ENCODE measurements at regions of chr2 and their contacts with region 1.

Region 1: GRCh38 chr2:173402405-173402974 is 47.8 kb downstream of the CDCA7 start:
- DNase-seq: peak; percentile 84 to 89
- ATAC-seq: peak; percentile 93
- H3K4me3 ChIP-seq: no peak overlapping the region
- H3K27ac ChIP-seq: no peak overlapping the region
- H3K4me1 ChIP-seq: no peaks in the 10 kb centered on the region
- H3K27me3 ChIP-seq: peaks cover 0 to 1% of the 10 kb centered on the region in 2 donors

Region 2: DNA sequence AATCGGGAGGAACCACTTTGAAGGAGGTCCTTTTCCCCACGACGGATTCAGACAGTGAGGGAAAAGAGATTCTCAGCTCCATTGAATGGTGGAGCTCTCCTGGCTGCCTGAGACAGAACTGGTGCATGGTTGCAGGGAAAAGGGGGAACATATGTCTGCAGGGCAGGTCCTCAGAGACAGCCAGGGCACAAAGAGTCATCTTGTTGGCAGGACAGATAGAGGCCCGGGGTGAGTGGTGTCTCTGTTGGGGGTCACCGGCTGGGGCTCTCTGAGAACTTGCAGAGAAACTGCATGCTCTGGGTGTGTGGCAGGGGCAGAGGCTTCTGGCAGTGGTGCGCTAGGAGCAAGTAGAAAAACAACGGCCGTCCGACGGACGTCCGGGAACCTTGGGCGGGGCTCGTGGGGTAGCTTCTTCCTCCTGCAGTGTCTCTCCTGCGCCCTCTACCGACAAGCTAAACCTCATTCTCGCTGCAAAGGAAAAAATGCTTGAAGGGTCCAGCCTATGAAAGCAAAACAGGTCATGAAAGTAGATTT is 46.5 kb after region 1 on chr2:
- intact Hi-C with region 1: loop called in 1 of 2 experiments (anchors 5 kb)
- DNase-seq: peak; percentile 82 to 88
- ATAC-seq: peak; percentile 77
- H3K4me3 ChIP-seq: peak overlapping the region in 1 of 2 donors; percentile 30
- H3K27ac ChIP-seq: no peak overlapping the region
- H3K4me1 ChIP-seq: no peaks in the 10 kb centered on the region
- H3K27me3 ChIP-seq: no peaks in the 10 kb centered on the region

Region 3: GRCh38 chr2:173752152-173752551 is 349.7 kb after region 1 on chr2:
- intact Hi-C with region 1: loop called in 1 of 2 experiments (anchors 10 kb)
- DNase-seq: no peak
- ATAC-seq: no peak
- H3K4me3 ChIP-seq: no peak overlapping the region
- H3K27ac ChIP-seq: no peak overlapping the region
- H3K4me1 ChIP-seq: no peaks in the 10 kb centered on the region
- H3K27me3 ChIP-seq: no peaks in the 10 kb centered on the region

Region 4: DNA sequence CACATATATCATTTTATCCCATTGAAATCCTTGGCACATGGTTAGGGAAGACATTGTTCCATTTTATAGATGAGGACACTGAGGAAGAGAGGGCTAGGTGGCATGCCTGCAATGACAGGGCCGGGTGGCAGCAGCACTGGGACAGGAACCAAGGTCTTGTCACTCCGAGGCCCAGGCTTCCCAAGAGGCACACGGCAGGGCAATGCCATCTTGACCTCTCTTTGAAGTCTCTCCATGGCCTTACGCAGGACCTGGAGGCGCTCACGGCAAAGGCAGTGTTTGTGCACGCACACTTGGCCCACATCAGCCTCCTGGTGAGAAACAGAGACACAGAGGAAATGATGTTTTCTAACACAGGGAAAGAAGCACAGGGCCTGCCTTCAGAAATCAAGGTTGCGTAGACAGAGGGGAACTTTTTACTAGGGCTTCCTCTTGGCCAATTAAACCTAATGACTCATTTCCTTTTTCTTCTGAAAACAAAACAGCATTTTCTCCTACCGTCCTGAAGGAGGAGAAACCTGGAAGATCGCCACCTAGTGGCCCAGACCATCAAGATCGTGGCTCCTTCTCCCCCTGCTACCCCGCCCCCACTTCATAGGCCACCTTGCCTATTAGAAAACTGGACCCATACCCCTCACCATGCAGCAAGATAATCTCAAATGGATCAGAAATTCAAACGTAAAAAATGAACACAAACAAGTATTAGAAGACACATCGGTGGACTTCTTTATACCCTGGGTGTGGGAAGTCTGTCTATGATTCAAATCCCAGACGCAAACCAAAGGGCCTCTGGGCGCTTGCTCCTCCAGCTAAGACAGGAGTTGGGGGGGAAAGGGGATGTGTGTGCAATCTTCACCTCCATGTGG is 637.3 kb after region 1 on chr2:
- intact Hi-C with region 1: loop called in 1 of 2 experiments (anchors 10 kb)
- DNase-seq: peak; percentile 94 to 95
- ATAC-seq: peak; percentile 86
- H3K4me3 ChIP-seq: no peak overlapping the region
- H3K27ac ChIP-seq: peak overlapping the region in 1 of 2 donors; percentile 94
- H3K4me1 ChIP-seq: no peaks in the 10 kb centered on the region
- H3K27me3 ChIP-seq: no peaks in the 10 kb centered on the region

Region 5: GRCh38 chr2:174051741-174052583 is 649.5 kb after region 1 on chr2:
- intact Hi-C with region 1: loop called (anchors 10 kb)
- DNase-seq: no peak
- ATAC-seq: no peak
- H3K4me3 ChIP-seq: no peak overlapping the region
- H3K27ac ChIP-seq: no peak overlapping the region
- H3K4me1 ChIP-seq: no peaks in the 10 kb centered on the region
- H3K27me3 ChIP-seq: no peaks in the 10 kb centered on the region

Region 6: GRCh38 chr2:174080672-174081121 is 678.2 kb after region 1 on chr2:
- intact Hi-C with region 1: loop called in 1 of 2 experiments (anchors 10 kb)
- DNase-seq: no peak
- ATAC-seq: no peak
- H3K4me3 ChIP-seq: no peak overlapping the region
- H3K27ac ChIP-seq: no peak overlapping the region
- H3K4me1 ChIP-seq: no peaks in the 10 kb centered on the region
- H3K27me3 ChIP-seq: no peaks in the 10 kb centered on the region

Region 7: GRCh38 chr2:174341286-174341994 is 939.0 kb after region 1 on chr2:
- intact Hi-C with region 1: loop called (anchors 2 kb)
- DNase-seq: peak; percentile 89 to 95
- ATAC-seq: peak; percentile 95
- H3K4me3 ChIP-seq: no peak overlapping the region
- H3K27ac ChIP-seq: no peak overlapping the region
- H3K4me1 ChIP-seq: no peaks in the 10 kb centered on the region
- H3K27me3 ChIP-seq: peaks cover 0 to 1% of the 10 kb centered on the region in 2 donors

Measured in aorta (tissue), 5 donors.